ENCODE measurements at regions of chr4 and their contacts with region 1.

Region 1: GRCh38 chr4:65999518-65999871 is 329.2 kb upstream of the EPHA5 start:
- DNase-seq: no peak
- ATAC-seq: peak; percentile 78
- H3K4me3 ChIP-seq: peak overlapping the region; percentile 69 to 88 (median 69)
- H3K27ac ChIP-seq: peak overlapping the region; percentile 95
- H3K4me1 ChIP-seq: 0 out of 2 replicates have a peak, but pooled peaks cover 4% of the 10 kb centered on the region
- H3K27me3 ChIP-seq: no peaks in the 10 kb centered on the region
- CTCF ChIP-seq: no peak
- EP300 ChIP-seq: no peak
- POLR2A ChIP-seq: no peak
- RAD21 ChIP-seq: no peak

Region 2: GRCh38 chr4:65976287-65976686 is 23.2 kb before region 1 on chr4:
- CTCF ChIA-PET with region 1: no interaction called
- POLR2A ChIA-PET with region 1: no interaction called
- in situ Hi-C with region 1: no loop called
- intact Hi-C with region 1: no loop called
- DNase-seq: no peak
- ATAC-seq: no peak
- H3K4me3 ChIP-seq: no peak overlapping the region
- H3K27ac ChIP-seq: no peak overlapping the region
- H3K4me1 ChIP-seq: no peaks in the 10 kb centered on the region
- H3K27me3 ChIP-seq: no peaks in the 10 kb centered on the region
- CTCF ChIP-seq: no peak
- EP300 ChIP-seq: no peak
- POLR2A ChIP-seq: no peak
- RAD21 ChIP-seq: no peak

Region 3: DNA sequence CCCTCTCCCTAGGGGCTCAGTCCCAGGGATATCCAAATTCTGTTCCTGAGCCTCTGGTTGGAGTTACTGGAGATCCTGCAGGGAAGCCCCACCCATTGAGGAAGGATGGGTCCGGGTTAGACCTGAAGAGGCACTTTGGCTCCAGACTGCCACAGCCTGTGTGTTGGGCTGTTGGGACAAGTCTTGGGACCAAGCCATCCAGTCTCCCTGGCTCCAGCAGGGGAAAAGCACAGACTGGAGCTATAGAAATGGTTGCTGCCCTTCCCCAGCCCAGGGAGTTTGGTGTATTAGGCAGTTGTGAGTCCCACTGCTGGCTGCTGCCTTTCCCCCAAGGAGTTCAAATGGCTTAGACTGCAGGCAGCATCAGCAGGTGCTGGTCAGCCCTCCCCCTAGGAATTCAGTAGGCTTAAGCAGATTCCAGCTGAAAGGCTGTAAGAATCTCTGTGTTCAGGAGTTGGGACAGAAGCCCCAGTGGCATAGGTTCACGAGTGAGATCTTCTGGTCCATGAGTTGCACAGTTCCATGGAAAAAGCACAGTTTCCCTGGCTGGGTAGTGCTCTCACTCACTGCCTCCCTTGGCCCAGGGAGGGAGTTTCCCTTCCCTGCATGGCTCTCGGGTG is 14.8 kb after region 1 on chr4:
- CTCF ChIA-PET with region 1: no interaction called
- POLR2A ChIA-PET with region 1: interaction called, 13 read pairs
- in situ Hi-C with region 1: no loop called
- intact Hi-C with region 1: no loop called
- DNase-seq: peak; percentile 16
- ATAC-seq: peak; percentile 85
- H3K4me3 ChIP-seq: no peak overlapping the region
- H3K27ac ChIP-seq: no peak overlapping the region
- H3K4me1 ChIP-seq: peaks cover 20% of the 10 kb centered on the region
- H3K27me3 ChIP-seq: no peaks in the 10 kb centered on the region
- CTCF ChIP-seq: no peak
- EP300 ChIP-seq: no peak
- POLR2A ChIP-seq: no peak
- RAD21 ChIP-seq: no peak

Measured in HepG2 (cell line).